CD4-positive, alpha-beta memory T cell (primary cell): ENCODE measurements at regions of chr19 and their contacts with region 1.

Region 1: DNA sequence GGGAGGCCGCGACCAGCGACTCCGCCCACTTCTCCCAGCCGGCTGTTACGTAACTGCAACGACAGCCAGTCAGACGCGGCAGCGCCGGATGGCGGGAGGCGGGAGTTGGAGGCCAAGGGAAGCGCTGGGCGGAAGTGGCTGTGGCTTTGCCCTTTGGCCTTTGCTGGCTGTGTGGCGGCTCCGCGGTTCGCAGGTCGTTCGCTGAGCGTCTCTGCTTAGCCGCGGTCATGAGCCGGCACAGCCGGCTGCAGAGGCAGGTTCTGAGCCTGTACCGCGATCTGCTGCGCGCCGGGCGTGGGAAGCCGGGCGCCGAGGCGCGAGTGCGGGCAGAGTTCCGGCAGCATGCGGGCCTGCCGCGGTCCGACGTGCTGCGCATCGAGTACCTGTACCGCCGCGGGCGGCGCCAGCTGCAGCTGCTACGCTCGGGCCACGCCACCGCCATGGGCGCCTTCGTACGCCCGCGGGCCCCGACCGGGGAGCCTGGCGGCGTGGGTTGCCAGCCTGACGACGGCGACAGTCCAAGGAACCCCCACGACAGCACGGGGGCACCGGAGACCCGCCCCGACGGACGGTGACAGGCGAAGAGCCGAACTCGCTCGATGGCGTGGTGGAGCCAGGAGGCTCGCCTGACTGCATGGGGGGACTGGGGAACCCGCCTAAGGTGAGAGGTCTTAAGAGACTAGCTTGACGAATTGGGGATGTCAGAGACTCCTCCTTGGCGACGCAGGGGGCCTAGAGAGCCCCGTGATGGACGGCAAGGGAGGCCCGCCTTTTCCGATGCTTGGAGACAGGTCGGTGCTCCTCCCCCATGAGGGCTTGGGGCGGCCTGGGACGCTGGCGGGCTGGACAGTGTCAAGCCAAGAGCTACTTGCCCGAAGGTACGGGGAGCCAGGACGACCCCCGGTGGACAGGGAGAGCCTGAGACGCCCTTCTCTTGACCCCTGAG is at the start of gene SDHAF1:
- DNase-seq: peak; percentile 87 to 92 (median 87)
- H3K4me3 ChIP-seq: peak within 1 kb of the TSS; percentile 69 to 82
- H3K4me3 Mint-ChIP-seq: peak within 1 kb of the TSS; percentile 91 to 96 (median 94)
- H3K27ac ChIP-seq: peak within 1 kb of the TSS; percentile 71
- H3K27ac Mint-ChIP-seq: peak within 1 kb of the TSS; percentile 92 to 97 (median 97)
- H3K4me1 ChIP-seq: peaks cover 26% of the 10 kb centered on the region
- H3K4me1 Mint-ChIP-seq: peaks cover 20 to 48% (median 37%) of the 10 kb centered on the region in 4 donors
- H3K27me3 ChIP-seq: no peaks in the 10 kb centered on the region
- H3K27me3 Mint-ChIP-seq: no peaks in the 10 kb centered on the region
- total RNA-seq, gene SDHAF1: 25.7 to 25.8 TPM

Region 2: DNA sequence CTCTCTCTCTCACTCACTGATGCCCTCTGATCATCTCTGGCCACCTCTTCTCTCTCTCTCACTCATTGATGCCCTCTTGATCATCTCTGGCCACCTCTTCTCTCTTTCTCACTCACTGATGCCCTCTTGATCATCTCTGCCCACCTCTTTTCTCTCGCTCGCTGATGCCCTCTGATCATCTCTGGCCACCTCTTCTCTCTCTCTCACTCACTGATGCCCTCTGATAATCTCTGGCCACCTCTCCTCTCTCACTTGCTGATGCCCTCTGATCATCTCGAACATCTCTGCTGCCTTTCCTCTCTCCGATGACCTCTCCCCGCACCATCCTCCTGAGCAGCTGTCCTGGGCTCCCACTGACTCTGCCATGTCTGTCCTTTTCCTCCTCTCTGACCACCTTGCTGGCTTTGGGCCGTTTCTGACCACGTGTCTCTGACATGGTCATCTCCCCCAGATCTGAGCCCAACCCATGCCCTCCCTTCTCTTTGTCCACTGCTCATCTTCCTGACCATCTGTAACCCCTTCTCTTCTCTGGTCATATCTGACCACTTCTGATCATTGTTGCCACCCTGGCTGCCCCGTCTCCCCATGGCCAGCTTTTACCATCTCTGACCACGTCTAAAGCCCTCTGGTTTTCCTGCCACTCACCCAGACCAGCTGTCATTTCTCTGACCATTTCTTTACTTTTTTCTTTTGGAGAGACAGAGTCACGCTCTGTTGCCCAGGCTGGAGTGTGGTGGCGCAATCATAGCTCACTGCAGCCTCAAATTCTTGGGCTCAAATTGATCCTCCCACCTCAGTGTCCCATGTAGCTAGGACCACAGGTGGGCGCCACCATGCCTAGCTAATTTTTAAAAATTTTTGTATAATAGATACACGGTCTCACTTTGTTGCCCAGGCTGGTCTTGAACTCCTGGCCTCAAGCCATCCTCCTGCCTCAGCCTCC is 56.8 kb before region 1 on chr19:
- CTCF ChIA-PET with region 1: no interaction called
- POLR2A ChIA-PET with region 1: no interaction called
- intact Hi-C with region 1: no loop called
- DNase-seq: no peak
- H3K4me3 ChIP-seq: peak overlapping the region in 1 of 2 donors; percentile 2
- H3K4me3 Mint-ChIP-seq: peak overlapping the region; percentile 81 to 96 (median 88)
- H3K27ac ChIP-seq: no peak overlapping the region
- H3K27ac Mint-ChIP-seq: peak overlapping the region; percentile 61 to 91 (median 81)
- H3K4me1 ChIP-seq: peaks cover 35% of the 10 kb centered on the region
- H3K4me1 Mint-ChIP-seq: peaks cover 30 to 53% (median 42%) of the 10 kb centered on the region in 4 donors
- H3K27me3 ChIP-seq: no peaks in the 10 kb centered on the region
- H3K27me3 Mint-ChIP-seq: no peaks in the 10 kb centered on the region

Region 3: DNA sequence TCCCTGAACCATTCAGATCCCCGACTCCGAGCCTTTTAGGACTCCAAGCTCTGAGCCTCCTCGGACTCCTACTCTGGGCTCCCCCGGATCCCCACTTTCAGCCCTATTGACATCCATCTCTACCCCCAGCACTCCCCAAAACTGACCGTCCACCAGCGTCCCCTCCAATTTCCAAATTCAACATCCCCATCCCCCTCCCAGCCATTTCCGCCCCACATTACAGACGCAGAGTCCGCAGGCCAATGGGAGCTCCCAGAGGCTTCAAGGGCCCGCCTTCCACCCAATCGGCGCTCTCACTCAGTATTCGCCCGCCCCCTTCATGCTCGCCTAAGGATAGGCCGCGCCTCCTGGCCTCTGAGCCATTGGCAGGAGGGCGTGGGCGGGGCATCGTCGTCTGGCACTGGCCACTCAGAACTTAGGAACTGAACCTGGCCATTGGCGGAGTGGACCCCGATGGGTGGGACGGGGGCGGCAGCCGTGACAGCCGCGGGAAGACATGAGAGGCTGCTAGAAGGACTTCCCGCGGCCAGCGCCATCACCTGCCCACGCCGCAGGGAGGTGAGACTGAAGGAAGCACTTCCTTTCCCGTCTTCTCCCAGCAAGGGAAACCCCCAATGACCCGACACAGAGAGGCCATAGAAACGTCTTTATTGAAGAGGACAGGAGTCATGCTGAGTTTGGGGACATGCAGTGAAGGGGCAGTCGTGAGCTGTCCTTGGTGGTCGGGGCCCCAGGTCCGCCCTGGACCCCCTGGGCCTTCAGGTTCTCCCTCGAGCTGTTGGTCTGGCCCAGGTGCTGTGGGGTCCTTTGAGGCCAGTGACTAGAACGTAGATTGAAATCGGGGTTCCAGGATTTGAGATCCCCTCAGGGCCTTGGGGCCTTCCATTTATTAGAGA is 19.0 kb after region 1 on chr19 and contains the start of gene ALKBH6:
- CTCF ChIA-PET with region 1: interaction called, 4 read pairs
- POLR2A ChIA-PET with region 1: interaction called, 20 read pairs
- intact Hi-C with region 1: loop called (anchors 1 kb)
- DNase-seq: peak; percentile 97 to 99 (median 98)
- H3K4me3 ChIP-seq: peak within 1 kb of the TSS; percentile 92
- H3K4me3 Mint-ChIP-seq: peak within 1 kb of the TSS; percentile 94 to 99 (median 94)
- H3K27ac ChIP-seq: peak within 1 kb of the TSS; percentile 74
- H3K27ac Mint-ChIP-seq: peak within 1 kb of the TSS; percentile 85 to 99 (median 98)
- H3K4me1 ChIP-seq: peaks cover 30% of the 10 kb centered on the region
- H3K4me1 Mint-ChIP-seq: peaks cover 25 to 50% (median 33%) of the 10 kb centered on the region in 4 donors
- H3K27me3 ChIP-seq: no peaks in the 10 kb centered on the region
- H3K27me3 Mint-ChIP-seq: no peaks in the 10 kb centered on the region
- total RNA-seq, gene ALKBH6: 50.9 to 51.0 TPM